Naive thymus-derived CD4-positive, alpha-beta T cell (primary cell): ENCODE measurements at regions of chr15 and their contacts with region 1.

Region 1: GRCh38 chr15:32688151-32688639 is 29.6 kb upstream of the GREM1 start:
- DNase-seq: no peak
- ATAC-seq: no peak
- H3K4me3 ChIP-seq: no peak overlapping the region
- H3K4me3 Mint-ChIP-seq: no peak overlapping the region
- H3K27ac ChIP-seq: no peak overlapping the region
- H3K27ac Mint-ChIP-seq: no peak overlapping the region
- H3K4me1 ChIP-seq: no peaks in the 10 kb centered on the region
- H3K4me1 Mint-ChIP-seq: peaks cover 0 to 6% (median 0%) of the 10 kb centered on the region in 7 donors
- H3K27me3 ChIP-seq: no peaks in the 10 kb centered on the region
- H3K27me3 Mint-ChIP-seq: peaks cover 0 to 11% (median 7%) of the 10 kb centered on the region in 5 donors

Region 2: DNA sequence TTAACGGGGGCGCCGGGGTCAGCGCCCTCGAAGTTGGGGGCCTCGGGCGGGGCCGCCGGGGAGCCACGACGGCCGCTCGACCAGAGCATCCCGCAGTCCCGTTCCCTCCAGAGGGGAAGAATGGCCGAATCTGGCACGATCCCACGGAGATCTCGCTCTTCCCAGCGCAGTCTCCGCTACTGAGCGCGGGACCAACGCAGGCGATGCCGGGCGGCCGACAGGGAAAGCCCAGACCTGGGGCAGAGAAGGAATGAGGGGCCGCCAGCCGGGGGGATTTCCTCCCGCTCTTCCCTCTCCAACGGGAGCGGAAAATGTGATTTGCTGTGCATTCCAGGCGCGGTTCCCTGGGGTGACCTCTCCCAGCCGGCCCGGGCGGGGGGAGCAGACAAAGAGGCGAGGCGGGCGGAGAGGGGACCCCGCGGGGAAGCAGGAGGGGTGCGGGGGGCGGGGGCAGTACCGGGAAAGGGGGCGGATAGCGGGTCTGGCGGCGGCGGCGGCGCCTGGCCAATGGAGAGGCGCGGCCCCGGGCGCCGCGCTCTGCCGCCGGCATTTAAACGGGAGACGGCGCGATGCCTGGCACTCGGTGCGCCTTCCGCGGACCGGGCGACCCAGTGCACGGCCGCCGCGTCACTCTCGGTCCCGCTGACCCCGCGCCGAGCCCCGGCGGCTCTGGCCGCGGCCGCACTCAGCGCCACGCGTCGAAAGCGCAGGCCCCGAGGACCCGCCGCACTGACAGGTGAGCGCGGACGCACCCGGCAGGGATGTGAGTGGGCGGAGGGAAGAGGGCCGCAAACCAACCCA is 29.4 kb after region 1 on chr15 and contains the start of gene GREM1:
- CTCF ChIA-PET with region 1: no interaction called
- POLR2A ChIA-PET with region 1: no interaction called
- intact Hi-C with region 1: loop called in 1 of 2 experiments (anchors 2 kb)
- DNase-seq: no peak
- ATAC-seq: no peak
- H3K4me3 ChIP-seq: no peak within 1 kb of the TSS
- H3K4me3 Mint-ChIP-seq: peak within 1 kb of the TSS in 8 of 10 donors; percentile 16 to 78 (median 43)
- H3K27ac ChIP-seq: no peak within 1 kb of the TSS
- H3K27ac Mint-ChIP-seq: no peak within 1 kb of the TSS
- H3K4me1 ChIP-seq: no peaks in the 10 kb centered on the region
- H3K4me1 Mint-ChIP-seq: peaks cover 8 to 34% (median 22%) of the 10 kb centered on the region in 7 donors
- H3K27me3 ChIP-seq: peaks cover 0 to 4% of the 10 kb centered on the region in 2 donors
- H3K27me3 Mint-ChIP-seq: peaks cover 58 to 90% (median 82%) of the 10 kb centered on the region in 5 donors
- total RNA-seq, gene GREM1: not detected